IMR-90 (cell line): ENCODE measurements at regions of chr4 and their contacts with region 1.

Region 1: DNA sequence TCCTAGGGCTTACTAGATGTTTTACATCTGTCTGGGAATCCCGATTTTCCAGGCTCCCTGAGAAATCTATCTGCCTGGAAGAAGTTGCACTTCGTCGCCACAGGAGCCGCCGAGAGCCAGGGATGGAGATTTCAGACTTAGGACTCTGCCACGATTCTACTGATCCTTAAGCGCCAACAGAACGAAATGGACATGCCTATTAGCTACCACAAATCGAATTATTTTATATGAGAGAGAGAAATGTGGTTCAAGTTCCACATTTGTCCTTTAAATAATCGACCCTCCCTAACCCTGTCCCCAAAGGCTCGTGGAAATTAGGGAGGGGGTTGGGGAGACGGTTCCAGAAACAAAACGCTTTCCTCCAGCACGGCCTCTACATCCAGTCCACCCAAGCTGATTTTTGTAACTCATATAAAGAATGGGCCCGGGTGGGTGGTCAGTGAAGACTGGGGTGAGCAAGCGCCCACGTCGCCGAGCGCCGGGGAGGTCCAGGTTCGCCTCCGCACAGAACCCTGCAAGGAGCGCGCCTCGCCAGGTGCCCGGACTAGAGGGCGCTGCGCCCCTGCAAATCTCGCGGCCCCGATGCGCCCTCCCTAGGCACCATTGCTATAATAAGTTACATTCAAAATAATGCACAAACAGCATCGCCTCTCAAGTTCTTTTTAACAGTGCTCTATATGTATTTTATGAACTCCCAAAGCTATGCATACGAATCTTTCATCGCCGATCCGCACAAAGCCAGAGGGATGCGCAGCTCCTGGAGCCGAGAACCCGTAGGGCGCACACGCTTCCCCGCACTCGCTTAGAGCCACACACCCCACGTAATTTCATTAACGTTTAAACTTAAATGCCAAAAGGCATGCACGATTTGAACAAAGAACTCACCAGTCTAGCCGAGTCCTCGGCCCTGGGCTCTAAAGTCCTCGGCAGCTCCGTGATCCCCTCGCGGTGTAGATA is 2.1 kb upstream of the FAT1 start:
- DNase-seq: peak; percentile 88
- ATAC-seq: peak; percentile 62
- H3K4me3 ChIP-seq: peak overlapping the region; percentile 89
- H3K27ac ChIP-seq: peak overlapping the region; percentile 97
- H3K4me1 ChIP-seq: peaks cover 10% of the 10 kb centered on the region
- H3K27me3 ChIP-seq: no peaks in the 10 kb centered on the region
- CTCF ChIP-seq: peak; percentile 91
- POLR2A ChIP-seq: peak; percentile 61; the same call in 1 of the 2 replicates
- RAD21 ChIP-seq: peak; percentile 90

Region 2: GRCh38 chr4:186669159-186669731 is 56.5 kb before region 1 on chr4:
- CTCF ChIA-PET with region 1: no interaction called
- POLR2A ChIA-PET with region 1: no interaction called
- dilution Hi-C with region 1: no loop called
- in situ Hi-C with region 1: no loop called
- intact Hi-C with region 1: loop called (anchors 2 kb)
- DNase-seq: peak; percentile 81
- ATAC-seq: peak; percentile 68
- H3K4me3 ChIP-seq: no peak overlapping the region
- H3K27ac ChIP-seq: peak overlapping the region; percentile 89
- H3K4me1 ChIP-seq: peaks cover 22% of the 10 kb centered on the region
- H3K27me3 ChIP-seq: no peaks in the 10 kb centered on the region
- CTCF ChIP-seq: peak; percentile 56
- POLR2A ChIP-seq: no peak
- RAD21 ChIP-seq: peak; percentile 65

Region 3: GRCh38 chr4:186829740-186830449 is 104.1 kb after region 1 on chr4:
- CTCF ChIA-PET with region 1: no interaction called
- POLR2A ChIA-PET with region 1: no interaction called
- dilution Hi-C with region 1: no loop called
- in situ Hi-C with region 1: no loop called
- intact Hi-C with region 1: loop called (anchors 5 kb)
- DNase-seq: peak; percentile 98
- ATAC-seq: peak; percentile 85
- H3K4me3 ChIP-seq: no peak overlapping the region
- H3K27ac ChIP-seq: peak overlapping the region; percentile 56
- H3K4me1 ChIP-seq: peaks cover 20% of the 10 kb centered on the region
- H3K27me3 ChIP-seq: no peaks in the 10 kb centered on the region
- CTCF ChIP-seq: no peak
- POLR2A ChIP-seq: no peak
- RAD21 ChIP-seq: no peak

Region 4: DNA sequence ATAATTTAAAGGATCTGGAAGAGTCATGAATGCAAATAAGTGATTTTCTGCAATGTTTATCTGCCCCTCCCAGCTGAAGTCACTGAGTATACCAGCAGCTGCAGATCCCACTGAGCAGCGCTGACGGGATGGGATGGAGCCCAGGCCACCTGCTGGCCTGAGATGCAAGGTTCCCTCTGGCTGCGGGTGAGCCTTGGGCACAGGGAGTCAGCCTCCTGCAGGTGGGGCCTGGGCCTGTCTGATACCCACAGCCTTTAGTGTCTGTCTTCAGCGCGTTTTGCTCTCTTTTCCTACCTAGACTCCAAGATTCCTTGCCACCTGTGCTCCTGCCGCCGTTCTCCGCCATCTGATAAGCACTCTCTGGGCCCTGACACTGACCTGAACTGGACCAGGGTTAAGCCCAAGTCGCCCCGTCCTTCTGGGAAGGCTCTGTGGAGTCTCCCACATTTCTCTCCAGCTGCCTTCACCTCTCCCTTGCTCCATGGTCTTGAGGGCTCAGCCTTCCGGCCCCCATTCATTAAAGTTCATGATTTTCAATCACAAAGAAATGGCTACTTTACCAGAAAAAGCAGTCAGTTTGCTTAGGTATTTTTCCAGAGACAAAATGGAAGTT is 221.0 kb after region 1 on chr4:
- CTCF ChIA-PET with region 1: no interaction called
- POLR2A ChIA-PET with region 1: no interaction called
- dilution Hi-C with region 1: no loop called
- in situ Hi-C with region 1: loop called (anchors 25 kb)
- intact Hi-C with region 1: no loop called
- DNase-seq: peak; percentile 34
- ATAC-seq: no peak
- H3K4me3 ChIP-seq: no peak overlapping the region
- H3K27ac ChIP-seq: no peak overlapping the region
- H3K4me1 ChIP-seq: peaks cover 7% of the 10 kb centered on the region
- H3K27me3 ChIP-seq: no peaks in the 10 kb centered on the region
- CTCF ChIP-seq: peak; percentile 31
- POLR2A ChIP-seq: no peak
- RAD21 ChIP-seq: peak; percentile 42

Region 5: GRCh38 chr4:187218705-187219245 is 493.0 kb after region 1 on chr4:
- CTCF ChIA-PET with region 1: no interaction called
- POLR2A ChIA-PET with region 1: no interaction called
- dilution Hi-C with region 1: no loop called
- in situ Hi-C with region 1: no loop called
- intact Hi-C with region 1: loop called (anchors 5 kb)
- DNase-seq: peak; percentile 74
- ATAC-seq: peak; percentile 95
- H3K4me3 ChIP-seq: peak overlapping the region; percentile 5; the same call in 1 of the 2 replicates
- H3K27ac ChIP-seq: peak overlapping the region; percentile 74; the same call in 1 of the 2 replicates
- H3K4me1 ChIP-seq: peaks cover 2% of the 10 kb centered on the region
- H3K27me3 ChIP-seq: no peaks in the 10 kb centered on the region
- CTCF ChIP-seq: no peak
- POLR2A ChIP-seq: no peak
- RAD21 ChIP-seq: no peak

Region 6: DNA sequence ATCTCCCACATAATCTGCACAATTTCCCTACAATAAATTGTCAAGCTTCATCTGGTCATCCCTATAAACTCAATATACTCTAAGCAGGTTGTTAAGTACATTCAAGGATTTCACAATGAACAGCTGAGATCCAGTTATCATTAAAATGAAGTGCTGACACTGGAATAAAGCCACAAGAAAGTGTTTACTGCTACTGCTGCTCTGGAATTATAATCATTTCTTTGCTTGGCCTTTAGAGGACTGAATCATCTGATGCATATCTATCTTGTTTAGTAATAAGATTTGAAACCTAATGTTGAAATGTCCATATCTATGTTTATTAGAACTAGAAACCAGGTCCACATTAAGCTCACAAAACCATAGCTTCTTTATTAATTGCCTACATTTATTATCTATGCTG is 931.2 kb after region 1 on chr4:
- CTCF ChIA-PET with region 1: interaction called, 3 read pairs
- POLR2A ChIA-PET with region 1: no interaction called
- dilution Hi-C with region 1: no loop called
- in situ Hi-C with region 1: no loop called
- intact Hi-C with region 1: loop called (anchors 10 kb)
- DNase-seq: peak; percentile 90
- ATAC-seq: peak; percentile 96
- H3K4me3 ChIP-seq: no peak overlapping the region
- H3K27ac ChIP-seq: no peak overlapping the region
- H3K4me1 ChIP-seq: peaks cover 2% of the 10 kb centered on the region; the same call in 1 of the 2 replicates
- H3K27me3 ChIP-seq: no peaks in the 10 kb centered on the region
- CTCF ChIP-seq: no peak
- POLR2A ChIP-seq: no peak
- RAD21 ChIP-seq: no peak